ACHN (cell line): ENCODE measurements at regions of chr6 and their contacts with region 1.

Region 1: GRCh38 chr6:116279260-116280063 is at the start of gene TSPYL1:
- DNase-seq: peak; percentile 96

Region 2: DNA sequence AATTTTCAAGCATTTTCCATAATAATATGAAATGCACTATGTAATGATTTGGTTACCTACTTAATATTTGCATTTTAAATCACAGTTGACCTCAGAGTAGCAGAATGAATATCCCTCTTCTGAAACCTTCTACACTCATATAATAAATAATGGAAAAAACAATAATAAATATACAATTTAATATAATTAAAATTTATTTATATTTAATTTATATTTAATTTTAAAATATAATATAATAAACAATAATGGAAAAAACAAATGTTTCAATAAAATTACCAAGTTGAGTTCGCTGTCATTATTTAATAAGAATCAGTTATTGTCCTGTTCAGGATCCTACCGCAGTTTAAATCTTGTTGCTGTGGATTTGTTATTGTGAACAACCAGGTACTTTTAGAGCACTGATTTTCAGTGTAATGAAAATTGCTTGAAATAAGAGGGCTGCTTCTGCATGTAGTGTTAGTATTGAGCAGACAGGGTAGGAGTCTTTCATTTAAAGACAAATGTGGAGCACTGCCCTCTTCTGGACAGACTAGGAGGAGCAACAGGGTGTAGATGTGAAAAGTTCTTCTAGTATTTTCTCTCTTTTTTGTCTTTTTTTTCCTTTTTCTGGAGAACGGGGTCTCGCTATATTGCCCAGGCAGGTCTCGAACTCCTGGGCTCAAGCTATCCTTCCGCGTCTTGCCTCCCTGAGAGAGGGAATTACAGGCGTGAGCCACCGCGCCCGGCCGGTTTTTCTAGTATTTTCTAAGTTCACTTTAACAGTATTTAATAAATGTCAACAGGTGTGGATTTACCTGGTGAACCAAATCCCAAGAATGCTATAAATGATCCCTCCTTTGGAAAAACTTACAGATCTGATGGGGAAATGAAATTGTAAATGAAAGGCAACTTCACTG is 252.5 kb after region 1 on chr6:
- in situ Hi-C with region 1: loop called (anchors 25 kb)
- DNase-seq: peak; percentile 62